Posterior cingulate gyrus (tissue), 11 donors: ENCODE measurements at regions of chr11 and their contacts with region 1.

Region 1: DNA sequence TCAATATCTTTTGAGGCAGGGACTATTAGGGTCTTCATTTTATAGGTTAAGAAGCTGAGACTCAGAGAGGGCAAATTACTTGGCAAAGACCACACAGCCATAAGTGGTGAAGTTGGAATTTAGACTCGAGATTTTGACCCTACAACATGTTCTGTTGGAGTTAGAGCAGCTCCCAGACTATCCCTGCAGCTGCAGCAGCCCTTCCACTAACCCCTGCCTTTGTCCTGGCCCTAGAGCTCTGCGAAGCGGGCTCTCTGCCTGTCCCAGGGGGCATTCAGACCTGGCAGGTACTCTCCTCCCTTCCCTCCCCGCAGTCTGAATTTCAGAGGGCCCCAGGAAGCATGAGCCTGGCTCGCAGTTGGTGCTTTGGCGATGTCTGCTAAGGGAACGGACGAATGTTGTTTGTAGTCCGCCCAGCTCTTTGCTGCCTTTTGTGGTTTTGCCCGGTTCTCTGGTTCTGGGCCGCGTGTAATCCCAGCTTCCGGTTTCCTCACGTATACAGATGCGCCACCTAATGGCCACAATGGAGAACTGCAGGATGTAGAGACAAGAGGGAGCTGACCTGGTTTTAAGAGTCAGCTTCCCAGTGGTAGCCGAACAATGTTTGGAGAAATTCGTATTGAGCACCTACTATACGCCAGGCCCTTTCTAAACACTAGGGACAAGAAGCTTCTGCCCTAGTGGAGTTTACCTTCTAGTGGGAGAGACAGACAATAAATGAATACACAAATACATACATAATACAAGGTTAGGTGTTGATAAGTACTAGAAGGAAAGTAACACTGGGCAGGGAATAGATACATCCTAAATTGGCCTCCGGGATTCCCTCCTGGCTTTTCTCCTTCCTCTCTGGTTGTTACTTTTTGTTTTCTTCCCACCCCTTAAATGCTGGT is 125.2 kb downstream of the ST3GAL4 start:
- DNase-seq: peak; percentile 69 to 96 (median 82)

Region 2: DNA sequence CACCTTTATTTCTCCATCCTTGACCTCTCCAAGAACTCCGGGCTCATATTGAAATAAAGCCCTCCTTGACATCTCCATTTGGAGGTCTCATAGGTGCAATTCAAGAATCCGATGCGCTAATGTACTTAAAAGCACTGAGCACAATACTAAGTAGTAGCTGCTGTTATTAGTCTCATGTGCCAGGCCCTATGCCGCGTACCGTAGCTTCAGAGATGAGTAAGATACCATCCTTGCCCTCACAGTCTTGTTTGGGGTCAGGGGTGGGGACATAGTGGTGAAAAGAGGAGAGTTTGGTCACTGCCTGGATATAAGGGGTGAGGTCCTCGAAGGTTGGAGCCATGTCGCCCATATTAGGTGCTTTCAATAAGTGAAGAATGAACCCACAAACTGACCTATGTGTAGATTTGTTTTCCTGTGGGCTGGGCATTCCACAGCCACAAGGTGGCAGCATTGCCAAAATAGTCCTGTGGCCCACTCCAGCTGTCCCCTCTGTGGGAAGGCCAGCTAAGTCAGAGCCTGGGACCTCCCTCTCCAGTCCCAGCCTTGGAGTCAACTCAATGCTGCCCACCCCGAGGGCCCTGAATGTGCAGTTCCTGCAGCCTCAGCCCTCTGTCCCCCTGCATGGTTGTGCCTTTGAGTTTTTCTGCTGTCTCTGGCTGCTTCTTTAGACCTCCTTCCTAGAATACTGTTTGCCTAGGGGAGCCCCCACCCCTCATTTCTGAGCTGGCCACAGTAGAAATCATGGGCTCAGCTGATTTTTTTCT is 170.2 kb before region 1 on chr11:
- intact Hi-C with region 1: loop called (anchors 1 kb)
- DNase-seq: peak; percentile 62 to 97 (median 82)

Region 3: GRCh38 chr11:126440792-126441514 is 39.7 kb before region 1 on chr11:
- intact Hi-C with region 1: loop called (anchors 1 kb)
- DNase-seq: peak; percentile 67 to 97 (median 84)

Region 4: GRCh38 chr11:126491092-126491491 is 10.4 kb after region 1 on chr11:
- intact Hi-C with region 1: no loop called
- DNase-seq: peak in 2 of 10 donors; percentile 73 to 75